Activated CD8-positive, alpha-beta T cell treated with anti-CD3 and anti-CD28 coated beads, Interleukin-2, amount 10 ng/mL, durations not matched to agents 7 days and 5 days (primary cell): ENCODE measurements at regions of chr20 and their contacts with region 1.

Region 1: GRCh38 chr20:56422076-56422823 is 10.2 kb downstream of the CASS4 start:
- DNase-seq: peak; percentile 19
- ATAC-seq: no peak
- H3K4me3 Mint-ChIP-seq: peak overlapping the region; percentile 38
- H3K27ac Mint-ChIP-seq: peak overlapping the region; percentile 77
- H3K4me1 Mint-ChIP-seq: peaks cover 70% of the 10 kb centered on the region
- H3K27me3 Mint-ChIP-seq: no peaks in the 10 kb centered on the region

Region 2: DNA sequence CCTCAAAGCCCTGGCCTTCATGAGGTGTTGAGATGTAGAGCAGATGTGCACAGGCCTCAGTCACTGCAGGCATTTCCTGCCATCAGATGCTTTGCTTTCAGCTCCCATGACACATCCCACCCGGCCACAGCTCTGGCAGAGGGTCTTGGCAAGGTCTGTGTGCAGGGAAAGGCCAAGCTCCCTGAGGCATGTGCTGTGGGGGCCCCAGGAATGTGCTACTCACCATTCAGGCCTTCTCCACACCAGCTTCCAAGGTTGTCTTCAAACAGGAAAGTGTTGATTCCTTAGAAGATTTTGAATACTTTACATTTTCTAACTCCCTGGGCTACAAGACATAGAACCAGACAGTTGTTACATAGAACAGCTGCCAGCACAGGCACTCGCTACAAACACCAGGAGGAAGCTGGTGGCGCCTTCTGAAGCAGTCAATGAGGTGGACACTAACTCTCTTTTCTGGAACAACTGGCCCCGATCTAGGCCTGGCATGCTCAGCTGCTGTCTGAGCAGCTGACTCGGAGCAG is 17.6 kb after region 1 on chr20:
- CTCF ChIA-PET with region 1: interaction called, 8 read pairs
- POLR2A ChIA-PET with region 1: interaction called, 10 read pairs
- DNase-seq: peak; percentile 43
- ATAC-seq: peak; percentile 42
- H3K4me3 Mint-ChIP-seq: peak overlapping the region; percentile 42
- H3K27ac Mint-ChIP-seq: peak overlapping the region; percentile 88
- H3K4me1 Mint-ChIP-seq: peaks cover 62% of the 10 kb centered on the region
- H3K27me3 Mint-ChIP-seq: no peaks in the 10 kb centered on the region